Psoas muscle (tissue), 8 donors: ENCODE measurements at regions of chr12 and their contacts with region 1.

Region 1: GRCh38 chr12:117587631-117588287 is 226.3 kb upstream of the NOS1 start:
- DNase-seq: peak; percentile 45 to 69
- ATAC-seq: peak; percentile 80 to 97 (median 90)
- H3K4me3 ChIP-seq: peak overlapping the region; percentile 35
- H3K27ac ChIP-seq: no peak overlapping the region
- H3K4me1 ChIP-seq: no peaks in the 10 kb centered on the region
- H3K27me3 ChIP-seq: no peaks in the 10 kb centered on the region
- CTCF ChIP-seq: peak; percentile 88

Region 2: DNA sequence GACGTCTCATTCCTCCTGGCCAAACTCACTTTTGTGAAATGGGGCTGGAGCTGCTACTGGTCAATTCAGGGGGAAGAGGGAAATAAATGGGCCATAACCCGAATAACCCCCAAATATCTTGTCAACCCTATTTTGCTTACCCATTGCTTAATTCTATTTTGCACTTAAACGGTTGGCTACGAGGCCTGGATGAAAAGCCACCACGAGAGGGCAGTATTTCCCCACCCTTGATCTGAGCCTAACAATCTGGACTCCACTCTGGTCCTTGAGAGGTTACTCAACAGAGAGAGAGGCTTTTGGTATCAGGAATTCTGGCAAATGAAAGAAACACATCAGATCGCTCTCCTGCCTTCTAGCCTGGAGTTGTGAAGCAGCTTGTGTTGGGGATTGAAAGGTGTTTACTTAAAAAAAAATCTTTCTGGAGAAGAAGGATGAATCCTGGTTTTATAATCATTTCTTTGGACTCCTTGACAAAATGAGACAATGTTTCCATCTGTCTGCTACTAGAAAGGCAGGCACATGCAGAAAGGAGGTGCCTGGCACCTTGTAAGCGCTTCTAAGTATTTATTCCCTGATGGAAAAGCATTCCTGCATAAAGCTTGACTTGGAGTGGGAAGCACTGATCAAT is 375.1 kb before region 1 on chr12:
- intact Hi-C with region 1: loop called in 1 of 2 experiments (anchors 10 kb)
- DNase-seq: peak; percentile 52 to 68
- ATAC-seq: peak; percentile 68 to 94 (median 86)
- H3K4me3 ChIP-seq: no peak overlapping the region
- H3K27ac ChIP-seq: no peak overlapping the region
- H3K4me1 ChIP-seq: peaks cover 7% of the 10 kb centered on the region
- H3K27me3 ChIP-seq: no peaks in the 10 kb centered on the region
- CTCF ChIP-seq: peak; percentile 78

Region 3: GRCh38 chr12:117236456-117237001 is 351.2 kb before region 1 on chr12:
- intact Hi-C with region 1: loop called (anchors 5 kb)
- DNase-seq: peak; percentile 76 to 88
- ATAC-seq: peak; percentile 52 to 78 (median 62)
- H3K4me3 ChIP-seq: no peak overlapping the region
- H3K27ac ChIP-seq: no peak overlapping the region
- H3K4me1 ChIP-seq: no peaks in the 10 kb centered on the region
- H3K27me3 ChIP-seq: no peaks in the 10 kb centered on the region
- CTCF ChIP-seq: peak; percentile 79

Region 4: DNA sequence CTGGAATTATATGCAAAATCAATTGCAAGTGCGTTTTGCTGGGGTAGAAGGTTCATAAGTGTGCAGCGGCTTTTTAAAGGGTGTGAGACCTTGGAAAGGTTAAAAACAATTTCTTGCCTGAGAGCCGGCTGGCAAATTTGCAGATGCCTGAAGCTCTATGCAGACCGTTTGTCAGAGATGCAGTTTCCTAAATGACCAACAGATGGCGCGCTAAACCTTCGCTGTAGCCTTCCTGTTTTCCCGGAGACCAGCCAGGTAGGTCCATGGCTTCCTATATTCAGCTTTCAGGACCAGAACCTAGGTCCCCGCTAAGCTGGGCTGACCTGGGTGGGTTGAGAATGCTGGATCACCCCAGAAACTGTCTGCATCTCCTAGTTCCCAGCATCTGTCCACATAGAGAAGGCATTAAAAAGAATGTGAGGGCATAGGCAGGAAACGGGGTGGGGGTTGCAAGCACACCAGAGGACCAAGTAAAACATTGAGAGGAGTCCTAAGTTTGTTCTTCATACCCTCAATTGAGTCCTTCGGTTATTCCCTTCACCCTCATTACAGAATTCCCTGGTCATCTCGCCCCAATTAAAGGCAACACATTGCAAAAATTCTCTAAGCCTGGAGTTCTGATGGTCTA is 220.6 kb before region 1 on chr12:
- intact Hi-C with region 1: loop called (anchors 1 kb)
- DNase-seq: peak; percentile 54 to 72
- ATAC-seq: peak; percentile 79 to 87 (median 83)
- H3K4me3 ChIP-seq: no peak overlapping the region
- H3K27ac ChIP-seq: no peak overlapping the region
- H3K4me1 ChIP-seq: no peaks in the 10 kb centered on the region
- H3K27me3 ChIP-seq: peaks cover 0 to 4% (median 0%) of the 10 kb centered on the region in 3 donors
- CTCF ChIP-seq: peak; percentile 90

Region 5: GRCh38 chr12:117439531-117440001 is 148.2 kb before region 1 on chr12:
- intact Hi-C with region 1: loop called in 1 of 2 experiments (anchors 2 kb)
- DNase-seq: peak; percentile 62 to 91
- ATAC-seq: peak; percentile 78 to 82 (median 80)
- H3K4me3 ChIP-seq: peak overlapping the region; percentile 53
- H3K27ac ChIP-seq: peak overlapping the region; percentile 69
- H3K4me1 ChIP-seq: peaks cover 36% of the 10 kb centered on the region
- H3K27me3 ChIP-seq: no peaks in the 10 kb centered on the region
- CTCF ChIP-seq: peak; percentile 17

Region 6: DNA sequence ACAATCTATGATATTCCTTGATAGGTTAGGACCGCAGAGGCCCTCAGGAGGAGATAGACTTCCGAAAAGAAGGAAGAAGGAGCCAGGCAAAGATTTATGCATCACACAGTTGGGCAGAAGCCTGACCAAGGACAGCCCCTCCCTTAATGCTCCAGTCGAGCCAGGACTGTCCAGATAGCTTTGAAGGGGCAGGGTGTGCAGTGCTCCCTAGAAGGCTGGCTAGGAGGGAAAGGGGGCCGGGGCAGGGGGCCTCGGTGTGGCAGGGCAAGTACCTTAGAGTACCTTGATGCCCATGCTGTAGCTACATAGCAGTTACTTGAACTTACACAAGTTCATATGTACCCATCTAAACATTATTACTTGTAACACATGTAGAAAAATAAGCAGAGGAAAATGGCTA is 131.7 kb before region 1 on chr12:
- intact Hi-C with region 1: loop called in 1 of 2 experiments (anchors 5 kb)
- DNase-seq: no peak
- ATAC-seq: no peak
- H3K4me3 ChIP-seq: no peak overlapping the region
- H3K27ac ChIP-seq: no peak overlapping the region
- H3K4me1 ChIP-seq: no peaks in the 10 kb centered on the region
- H3K27me3 ChIP-seq: no peaks in the 10 kb centered on the region
- CTCF ChIP-seq: no peak

Region 7: DNA sequence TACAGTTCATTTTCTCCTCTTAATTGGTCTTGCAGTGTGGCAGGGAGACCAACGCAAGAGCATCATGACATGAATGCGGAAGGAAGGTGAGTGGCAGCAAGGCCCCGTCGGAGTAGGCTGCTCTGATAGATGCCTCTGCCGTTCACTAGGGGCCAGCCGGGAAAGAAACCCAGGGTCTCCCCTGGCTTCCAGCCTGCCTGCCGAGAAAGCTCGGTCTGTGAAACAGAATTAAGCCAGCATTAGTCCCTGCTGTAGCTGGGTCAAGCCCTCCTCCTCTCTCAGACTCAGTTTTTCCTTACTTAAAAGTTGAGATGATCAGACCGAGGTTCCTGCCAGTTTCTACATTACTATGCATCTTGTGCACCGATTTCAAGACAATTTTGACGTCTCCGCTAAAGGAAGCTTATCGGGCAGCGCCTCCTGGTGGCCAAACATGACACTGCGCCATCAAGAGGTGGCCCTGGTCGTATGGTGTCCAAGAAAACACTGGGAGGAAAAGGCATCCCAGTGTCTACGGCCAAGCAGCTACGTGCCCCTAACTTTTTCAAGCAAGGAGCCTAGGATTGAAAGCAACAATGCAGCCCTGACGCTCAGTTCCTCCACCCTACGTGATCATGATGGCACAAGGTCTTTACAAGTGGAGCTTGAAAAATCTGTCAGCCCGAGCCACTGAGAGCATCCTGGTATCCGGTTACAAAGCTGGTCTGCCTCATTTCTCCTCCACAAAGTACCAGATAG is 249.4 kb after region 1 on chr12:
- intact Hi-C with region 1: loop called in 1 of 2 experiments (anchors 5 kb)
- DNase-seq: peak; percentile 73 to 85
- ATAC-seq: peak; percentile 60 to 84 (median 62)
- H3K4me3 ChIP-seq: no peak overlapping the region
- H3K27ac ChIP-seq: no peak overlapping the region
- H3K4me1 ChIP-seq: no peaks in the 10 kb centered on the region
- H3K27me3 ChIP-seq: peaks cover 0 to 20% (median 2%) of the 10 kb centered on the region in 3 donors
- CTCF ChIP-seq: peak; percentile 96